PC-9 (cell line): ENCODE measurements at regions of chr2 and their contacts with region 1.

Region 1: GRCh38 chr2:152036611-152037469 is 62.0 kb downstream of the CACNB4 start:
- DNase-seq: peak in 1 of 2 experiments; percentile 56
- H3K4me3 ChIP-seq: no peak overlapping the region
- H3K27ac ChIP-seq: no peak overlapping the region
- H3K4me1 ChIP-seq: no peaks in the 10 kb centered on the region
- H3K27me3 ChIP-seq: no peaks in the 10 kb centered on the region
- CTCF ChIP-seq: peak; percentile 86

Region 2: DNA sequence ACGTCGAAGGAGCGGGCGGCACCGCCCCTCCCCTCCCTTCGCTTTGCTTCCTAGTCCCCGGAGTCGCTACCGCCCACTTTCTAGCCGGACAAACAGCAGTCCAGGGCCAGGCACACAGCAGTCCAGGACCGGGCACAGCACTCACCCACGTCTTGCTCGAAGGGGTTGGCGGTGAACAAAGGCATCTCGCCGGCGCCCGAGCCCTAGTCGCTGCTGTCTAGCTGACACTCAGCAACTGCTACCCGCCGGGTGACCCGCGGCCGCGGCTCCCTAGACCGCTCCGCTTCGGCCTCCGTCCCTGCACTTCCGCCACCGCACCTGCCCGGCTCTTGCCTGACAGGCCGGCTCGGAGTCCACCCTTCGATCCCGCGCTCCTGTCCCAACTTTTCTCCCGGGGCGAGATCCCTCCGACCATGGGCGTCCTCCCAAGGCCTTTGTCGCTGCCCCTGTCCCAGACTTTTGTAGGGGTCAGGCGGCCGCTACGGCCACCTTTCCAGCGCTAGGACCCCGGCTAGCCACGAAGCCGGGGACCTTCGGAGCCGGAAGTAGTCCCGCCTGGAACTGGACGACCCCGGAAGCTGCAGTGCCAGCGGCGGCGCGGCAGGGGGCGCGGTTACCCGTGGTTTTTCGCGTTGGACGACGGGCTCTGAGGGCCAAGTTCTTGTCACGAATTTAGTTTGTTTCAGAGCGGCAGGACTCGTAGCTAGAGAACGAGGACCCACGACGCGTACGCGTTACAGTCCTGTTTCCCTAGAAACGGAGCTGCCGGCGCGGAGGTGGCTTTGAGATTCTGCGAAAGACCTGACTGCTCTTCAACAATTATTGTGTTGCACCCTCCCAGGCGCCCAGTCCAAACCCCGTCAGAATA is 138.9 kb after region 1 on chr2 and contains the start of gene STAM2:
- CTCF ChIA-PET with region 1: no interaction called
- POLR2A ChIA-PET with region 1: no interaction called
- intact Hi-C with region 1: loop called (anchors 1 kb)
- DNase-seq: peak; percentile 80 to 94
- H3K4me3 ChIP-seq: peak within 1 kb of the TSS; percentile 83
- H3K27ac ChIP-seq: peak within 1 kb of the TSS; percentile 84
- H3K4me1 ChIP-seq: peaks cover 22% of the 10 kb centered on the region
- H3K27me3 ChIP-seq: no peaks in the 10 kb centered on the region
- CTCF ChIP-seq: peak; percentile 95
- total RNA-seq, gene STAM2: 14.6 and 16.0 TPM in 2 replicates

Region 3: GRCh38 chr2:152627351-152627957 is 590.6 kb after region 1 on chr2:
- CTCF ChIA-PET with region 1: no interaction called
- POLR2A ChIA-PET with region 1: no interaction called
- intact Hi-C with region 1: loop called (anchors 5 kb)
- DNase-seq: no peak
- H3K4me3 ChIP-seq: no peak overlapping the region
- H3K27ac ChIP-seq: no peak overlapping the region
- H3K4me1 ChIP-seq: no peaks in the 10 kb centered on the region
- H3K27me3 ChIP-seq: no peaks in the 10 kb centered on the region
- CTCF ChIP-seq: peak; percentile 74

Region 4: DNA sequence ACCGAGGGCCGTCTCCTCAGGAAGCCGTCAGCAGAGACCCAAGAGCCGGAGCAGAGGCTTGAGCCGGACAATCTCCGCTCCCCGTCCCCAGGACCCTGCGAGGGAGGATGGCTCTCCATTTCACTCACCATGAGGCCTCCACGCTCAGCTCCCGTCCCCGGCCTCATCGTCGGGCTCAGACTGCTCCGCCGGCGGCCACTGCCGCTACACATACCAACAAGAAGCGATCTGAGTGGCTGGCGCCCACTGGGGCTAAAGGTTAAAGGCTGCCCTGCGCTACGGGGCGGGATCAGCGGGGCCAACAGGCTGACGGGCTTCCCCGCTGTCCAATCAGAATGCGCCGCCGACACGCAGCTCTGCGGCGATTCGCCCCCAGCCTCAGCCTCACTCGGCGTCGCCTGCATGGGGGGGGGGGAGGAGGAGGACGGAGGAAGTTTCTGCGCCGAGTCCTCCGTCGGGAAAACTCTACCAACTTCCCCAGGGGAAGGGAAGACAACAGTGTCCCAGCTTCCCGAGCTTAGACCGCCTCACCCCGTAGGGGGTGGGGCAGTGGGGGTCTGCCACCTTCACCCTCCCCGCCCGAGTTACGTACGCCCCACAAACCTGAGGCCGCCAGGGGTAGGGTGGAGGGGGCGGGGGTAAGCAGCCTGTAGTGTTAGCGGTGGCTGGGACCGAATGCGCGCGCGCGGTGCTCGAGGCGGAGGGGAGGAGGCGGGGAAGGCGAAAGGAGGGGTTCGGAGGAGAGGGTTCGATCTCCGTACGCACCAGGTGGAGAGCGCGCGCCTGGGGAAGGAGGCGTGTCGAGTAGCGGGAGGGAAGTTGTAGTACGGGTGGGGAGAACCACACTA is 680.6 kb after region 1 on chr2 and contains the start of gene PRPF40A:
- CTCF ChIA-PET with region 1: no interaction called
- POLR2A ChIA-PET with region 1: no interaction called
- intact Hi-C with region 1: loop called (anchors 10 kb)
- DNase-seq: peak; percentile 93 to 98
- H3K4me3 ChIP-seq: peak within 1 kb of the TSS; percentile 87
- H3K27ac ChIP-seq: peak within 1 kb of the TSS; percentile 82
- H3K4me1 ChIP-seq: peaks cover 21% of the 10 kb centered on the region
- H3K27me3 ChIP-seq: no peaks in the 10 kb centered on the region
- CTCF ChIP-seq: no peak
- total RNA-seq, gene PRPF40A: 94.1 and 119 TPM in 2 replicates

Region 5: DNA sequence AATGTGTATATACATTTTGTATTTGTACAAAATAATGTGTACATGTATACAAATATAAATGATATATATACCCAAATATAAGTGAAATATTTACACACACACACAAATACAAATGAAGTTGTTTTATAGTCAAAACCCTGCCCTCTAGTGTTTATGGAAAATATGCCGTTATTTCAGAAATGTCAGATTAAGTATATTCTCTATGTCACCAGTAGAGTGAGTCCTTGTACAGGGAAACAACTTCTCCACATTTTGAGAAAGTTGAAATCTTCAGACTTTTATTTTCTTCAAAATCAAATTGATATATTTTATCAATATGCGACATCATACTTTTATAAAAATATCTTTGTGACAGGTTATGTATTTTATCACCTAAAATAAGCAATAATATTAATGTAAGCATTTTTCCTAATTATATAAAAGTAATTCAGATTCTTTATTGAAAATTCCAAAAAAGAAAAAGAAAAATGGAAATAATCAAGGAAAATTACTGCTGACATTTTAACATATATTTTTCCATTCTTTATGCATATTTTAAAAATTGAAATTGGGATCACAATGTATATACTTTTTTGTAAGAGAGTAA is 704.0 kb after region 1 on chr2:
- CTCF ChIA-PET with region 1: no interaction called
- POLR2A ChIA-PET with region 1: no interaction called
- intact Hi-C with region 1: loop called (anchors 2 kb)
- DNase-seq: peak in 1 of 2 experiments; percentile 62
- H3K4me3 ChIP-seq: no peak overlapping the region
- H3K27ac ChIP-seq: no peak overlapping the region
- H3K4me1 ChIP-seq: no peaks in the 10 kb centered on the region
- H3K27me3 ChIP-seq: no peaks in the 10 kb centered on the region
- CTCF ChIP-seq: peak; percentile 90